Right cardiac atrium (tissue), 5 donors: ENCODE measurements at regions of chr18 and their contacts with region 1.

Region 1: GRCh38 chr18:61635901-61636528 is 256.8 kb downstream of the RNF152 start:
- DNase-seq: peak; percentile 21 to 74 (median 62)
- ATAC-seq: peak; percentile 76 to 85
- H3K4me3 ChIP-seq: no peak overlapping the region
- H3K27ac ChIP-seq: no peak overlapping the region
- H3K4me1 ChIP-seq: no peaks in the 10 kb centered on the region
- H3K27me3 ChIP-seq: no peaks in the 10 kb centered on the region

Region 2: DNA sequence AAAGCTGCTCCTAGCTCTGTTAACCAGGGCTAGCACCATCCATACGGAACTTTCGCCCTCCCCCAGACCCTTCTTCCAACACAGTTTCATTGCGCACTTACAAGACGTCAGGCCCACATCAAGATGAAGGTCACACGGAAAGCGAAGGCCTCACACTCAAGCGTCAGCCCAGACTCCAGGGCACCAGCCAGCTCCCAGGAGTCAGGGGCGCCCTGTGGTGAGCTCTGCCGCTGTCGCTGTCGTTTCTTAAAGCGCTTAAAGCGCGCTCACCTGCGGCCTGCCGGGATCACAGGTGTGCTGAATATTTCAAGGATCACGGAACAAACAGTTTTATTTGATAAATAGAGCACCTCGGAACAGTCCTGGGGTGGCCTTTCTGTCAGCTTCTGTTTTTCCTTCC is 139.6 kb before region 1 on chr18:
- intact Hi-C with region 1: no loop called
- DNase-seq: no peak
- ATAC-seq: no peak
- H3K4me3 ChIP-seq: no peak overlapping the region
- H3K27ac ChIP-seq: no peak overlapping the region
- H3K4me1 ChIP-seq: no peaks in the 10 kb centered on the region
- H3K27me3 ChIP-seq: no peaks in the 10 kb centered on the region

Region 3: DNA sequence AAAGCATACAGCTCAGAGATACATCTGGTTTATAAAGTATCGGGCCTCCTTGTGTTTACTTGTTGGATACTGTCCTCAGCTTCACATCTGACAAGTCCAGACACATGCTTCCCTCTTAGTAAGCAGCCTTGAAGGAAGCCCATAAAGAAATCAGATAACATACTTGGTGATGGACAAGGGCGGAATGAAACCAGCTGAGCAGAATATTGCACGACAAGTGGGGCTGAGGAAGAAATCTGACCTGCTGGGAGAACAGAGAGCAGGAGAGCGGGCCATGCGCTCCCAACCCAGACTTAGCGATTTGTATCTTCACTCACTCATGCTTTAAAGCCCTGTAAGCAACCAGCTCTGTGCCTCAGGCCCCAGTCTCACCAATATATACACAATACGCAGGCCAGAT is 94.3 kb before region 1 on chr18:
- intact Hi-C with region 1: no loop called
- DNase-seq: no peak
- ATAC-seq: no peak
- H3K4me3 ChIP-seq: no peak overlapping the region
- H3K27ac ChIP-seq: no peak overlapping the region
- H3K4me1 ChIP-seq: no peaks in the 10 kb centered on the region
- H3K27me3 ChIP-seq: no peaks in the 10 kb centered on the region

Region 4: GRCh38 chr18:61581578-61582201 is 54.3 kb before region 1 on chr18:
- intact Hi-C with region 1: loop called in 1 of 4 experiments (anchors 10 kb)
- DNase-seq: peak; percentile 69 to 92 (median 91)
- ATAC-seq: peak; percentile 92 to 93
- H3K4me3 ChIP-seq: peak overlapping the region; percentile 38
- H3K27ac ChIP-seq: peak overlapping the region; percentile 25
- H3K4me1 ChIP-seq: no peaks in the 10 kb centered on the region
- H3K27me3 ChIP-seq: no peaks in the 10 kb centered on the region

Region 5: GRCh38 chr18:61727241-61728193 is 91.5 kb after region 1 on chr18:
- intact Hi-C with region 1: no loop called
- DNase-seq: no peak
- ATAC-seq: no peak
- H3K4me3 ChIP-seq: no peak overlapping the region
- H3K27ac ChIP-seq: no peak overlapping the region
- H3K4me1 ChIP-seq: no peaks in the 10 kb centered on the region
- H3K27me3 ChIP-seq: no peaks in the 10 kb centered on the region

Region 6: DNA sequence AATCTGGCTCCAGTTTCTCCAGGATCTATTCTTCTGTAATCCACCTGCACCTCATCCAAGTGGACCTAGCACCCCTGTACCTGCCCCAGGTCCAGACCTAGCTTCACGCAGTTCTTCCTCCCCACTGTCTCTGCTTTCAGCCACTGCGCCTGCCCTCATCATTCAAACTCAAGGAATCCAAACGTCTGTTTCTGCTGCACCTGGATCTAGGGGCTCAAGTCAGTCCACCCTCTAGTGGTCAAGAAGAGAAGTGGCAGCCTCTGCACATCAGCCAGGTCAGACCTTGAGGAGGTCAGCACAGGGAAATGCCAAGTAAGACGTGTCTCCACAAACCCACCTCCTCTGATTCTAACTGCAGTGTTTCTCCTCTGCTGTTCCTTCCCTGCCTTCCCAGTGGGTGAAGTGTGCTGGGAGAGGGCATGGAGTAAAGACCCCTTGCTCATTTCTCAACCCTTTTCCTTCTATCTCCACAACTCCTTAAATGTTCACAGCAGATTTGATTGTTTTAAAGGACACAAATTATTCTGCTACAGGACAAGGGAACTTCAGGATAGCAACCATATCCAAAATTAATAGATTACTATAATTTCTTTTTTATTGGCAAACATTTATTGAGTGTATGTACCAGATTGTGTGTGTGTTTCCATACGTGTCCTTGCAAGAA is 265.4 kb after region 1 on chr18:
- intact Hi-C with region 1: loop called in 3 of 4 experiments (anchors 2 to 10 kb)
- DNase-seq: peak in 1 of 3 donors; percentile 52
- ATAC-seq: peak; percentile 77 to 84
- H3K4me3 ChIP-seq: no peak overlapping the region
- H3K27ac ChIP-seq: no peak overlapping the region
- H3K4me1 ChIP-seq: no peaks in the 10 kb centered on the region
- H3K27me3 ChIP-seq: no peaks in the 10 kb centered on the region